ENCODE measurements at regions of chr5 and their contacts with region 1.

Region 1: DNA sequence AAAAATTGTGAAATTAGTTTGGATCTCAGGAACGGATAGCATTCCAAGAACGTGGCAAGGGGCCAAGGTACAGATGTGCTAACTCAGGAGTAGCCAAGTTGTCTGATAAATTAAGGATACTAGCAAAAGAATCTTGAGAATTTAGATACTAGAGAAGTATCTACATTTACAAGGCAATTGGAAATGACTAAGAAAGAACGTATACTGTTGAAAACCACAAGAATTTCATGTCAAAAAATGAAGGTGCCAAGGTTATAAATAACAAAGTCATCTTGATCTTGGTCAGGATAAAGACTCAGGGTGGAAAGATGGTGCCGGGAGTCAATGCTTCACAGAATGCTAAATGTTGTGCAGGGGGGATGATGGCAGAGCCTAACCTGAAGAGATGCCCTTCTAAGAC is 19.2 kb downstream of the CAPSL start:
- DNase-seq: peak; percentile 88
- ATAC-seq: peak; percentile 76
- H3K4me3 ChIP-seq: no peak overlapping the region
- H3K27ac ChIP-seq: no peak overlapping the region
- H3K4me1 ChIP-seq: peaks cover 27% of the 10 kb centered on the region
- H3K27me3 ChIP-seq: no peaks in the 10 kb centered on the region
- CTCF ChIP-seq: no peak

Region 2: DNA sequence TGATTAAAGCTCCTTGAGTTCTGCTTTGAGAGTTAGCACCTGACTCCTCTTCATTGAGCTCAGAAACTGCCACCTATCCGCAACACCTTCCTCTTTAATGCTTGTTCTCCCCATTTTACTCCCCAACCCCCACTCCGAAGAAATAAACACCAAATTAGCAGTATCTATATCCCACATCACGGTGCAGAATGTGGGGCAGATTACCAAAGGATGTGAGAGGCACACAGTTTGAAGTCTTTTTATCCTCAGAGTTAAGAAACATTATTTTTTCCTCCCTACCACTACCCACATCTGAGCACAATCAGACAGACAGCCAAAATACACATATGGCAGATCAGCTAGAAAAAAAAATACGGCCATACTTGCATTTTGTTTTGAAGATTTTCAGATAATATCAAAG is 88.6 kb before region 1 on chr5:
- CTCF ChIA-PET with region 1: interaction called, 19 read pairs
- POLR2A ChIA-PET with region 1: no interaction called
- intact Hi-C with region 1: no loop called
- DNase-seq: no peak
- ATAC-seq: no peak
- H3K4me3 ChIP-seq: no peak overlapping the region
- H3K27ac ChIP-seq: no peak overlapping the region
- H3K4me1 ChIP-seq: no peaks in the 10 kb centered on the region
- H3K27me3 ChIP-seq: no peaks in the 10 kb centered on the region
- CTCF ChIP-seq: no peak

Region 3: DNA sequence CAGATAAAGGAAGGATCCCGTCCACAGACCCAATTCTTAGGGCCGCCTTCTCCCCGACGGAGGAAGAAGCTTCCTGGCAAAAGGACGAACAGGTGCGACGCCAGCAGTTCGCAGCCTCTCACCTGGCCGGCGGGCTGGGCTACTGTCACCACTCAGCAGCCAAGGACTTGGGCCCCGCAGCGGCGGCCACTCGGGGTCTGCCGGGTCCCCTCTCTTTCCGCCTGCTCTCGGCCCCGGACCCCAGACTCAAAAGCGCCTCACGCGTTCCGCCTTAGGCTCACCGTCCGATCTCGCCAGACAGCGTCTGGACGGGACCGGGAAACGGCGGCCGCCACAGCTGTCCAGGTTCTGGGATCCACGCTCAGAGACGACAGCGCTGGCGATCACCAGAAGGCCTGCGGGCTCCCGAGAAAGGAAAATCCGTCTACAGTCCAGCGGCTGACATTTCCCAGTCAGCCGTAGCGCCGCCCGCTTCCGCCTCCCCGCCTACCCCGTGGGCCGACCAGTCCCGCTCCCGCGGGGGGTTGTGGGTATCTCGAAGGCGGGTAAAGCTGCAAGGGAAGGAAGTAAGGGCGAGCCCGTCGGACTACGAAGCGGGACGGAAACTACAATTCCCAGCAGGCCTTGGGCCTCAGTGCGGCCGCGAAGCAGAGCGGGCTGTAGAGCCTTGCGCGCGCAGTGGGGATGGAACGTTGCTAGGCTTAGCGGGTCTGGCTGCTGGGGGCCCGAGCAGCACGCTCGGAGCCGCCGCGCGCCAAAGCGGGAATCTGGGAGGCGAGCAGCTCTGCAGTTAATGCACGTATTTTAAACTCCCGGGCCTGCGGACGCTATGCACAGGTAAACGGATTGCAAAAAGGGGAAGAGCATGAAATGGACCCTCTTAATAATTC is 232.5 kb after region 1 on chr5 and contains the starts of genes LMBRD2 and SKP2:
- CTCF ChIA-PET with region 1: no interaction called
- POLR2A ChIA-PET with region 1: no interaction called
- intact Hi-C with region 1: no loop called
- DNase-seq: peak; percentile 99
- ATAC-seq: peak; percentile 97
- H3K4me3 ChIP-seq: peak within 1 kb of the TSS; percentile 84
- H3K27ac ChIP-seq: peak within 1 kb of the TSS; percentile 4; the same call in 1 of the 2 replicates
- H3K4me1 ChIP-seq: peaks cover 38% of the 10 kb centered on the region
- H3K27me3 ChIP-seq: no peaks in the 10 kb centered on the region
- CTCF ChIP-seq: no peak
- total RNA-seq, gene LMBRD2: 9.1 and 21.1 TPM in 2 replicates
- total RNA-seq, gene SKP2: 32.0 and 33.2 TPM in 2 replicates

Measured in PC-3 (cell line).